ENCODE measurements at regions of chrX and their contacts with region 1.

Region 1: GRCh38 chrX:19990556-19991349 is at the start of gene BCLAF3:
- DNase-seq: peak; percentile 95
- H3K4me3 ChIP-seq: peak within 1 kb of the TSS; percentile 59 to 72
- H3K27ac ChIP-seq: peak within 1 kb of the TSS; percentile 40 to 48; a peak in 2 of 4 replicates
- H3K4me1 ChIP-seq: peaks cover 0 to 3% of the 10 kb centered on the region in 2 experiments; a peak in 2 of 4 replicates
- H3K27me3 ChIP-seq: no peaks in the 10 kb centered on the region
- CTCF ChIP-seq: peak; percentile 66
- EP300 ChIP-seq: no peak
- RAD21 ChIP-seq: peak; percentile 57
- polyA plus RNA-seq, gene BCLAF3: 1.1 and 1.5 TPM in 2 replicates

Region 2: DNA sequence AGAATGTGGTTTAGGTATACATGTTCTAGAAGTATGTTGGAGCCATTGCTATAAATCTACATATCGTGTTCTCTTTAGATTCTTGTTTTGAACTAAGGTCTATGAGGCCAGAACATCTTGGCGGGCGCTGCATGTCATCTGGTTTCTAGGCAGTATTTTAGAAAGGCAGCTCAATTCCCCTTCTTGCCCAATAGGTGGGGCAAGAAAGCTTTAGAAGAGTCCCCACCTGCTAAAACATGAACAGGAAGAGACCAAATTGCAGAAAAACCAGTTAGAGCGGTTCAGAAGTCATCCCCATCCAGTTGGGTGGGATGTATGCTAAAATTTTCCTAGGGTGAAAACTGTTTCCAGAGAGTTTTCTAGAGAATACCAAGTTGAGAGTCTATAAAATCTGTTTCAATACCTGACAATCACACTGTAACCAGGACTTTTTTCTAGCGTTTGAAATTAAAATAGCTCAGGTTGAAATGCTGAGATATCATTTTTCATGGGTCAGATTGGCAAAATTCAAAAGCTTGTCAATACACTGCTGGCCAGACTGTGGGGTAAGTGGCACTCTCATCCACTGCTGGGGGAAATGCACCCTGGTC is 85.9 kb before region 1 on chrX:
- CTCF ChIA-PET with region 1: interaction called, 12 read pairs
- POLR2A ChIA-PET with region 1: no interaction called
- DNase-seq: peak; percentile 59
- H3K4me3 ChIP-seq: no peak overlapping the region
- H3K27ac ChIP-seq: no peak overlapping the region
- H3K4me1 ChIP-seq: no peaks in the 10 kb centered on the region
- H3K27me3 ChIP-seq: peaks cover 8% of the 10 kb centered on the region; the same call in 1 of the 2 replicates
- CTCF ChIP-seq: peak; percentile 77
- EP300 ChIP-seq: no peak
- RAD21 ChIP-seq: peak; percentile 84

Measured in SK-N-SH (cell line).